BJ (cell line): ENCODE measurements at regions of chr2 and their contacts with region 1.

Region 1: DNA sequence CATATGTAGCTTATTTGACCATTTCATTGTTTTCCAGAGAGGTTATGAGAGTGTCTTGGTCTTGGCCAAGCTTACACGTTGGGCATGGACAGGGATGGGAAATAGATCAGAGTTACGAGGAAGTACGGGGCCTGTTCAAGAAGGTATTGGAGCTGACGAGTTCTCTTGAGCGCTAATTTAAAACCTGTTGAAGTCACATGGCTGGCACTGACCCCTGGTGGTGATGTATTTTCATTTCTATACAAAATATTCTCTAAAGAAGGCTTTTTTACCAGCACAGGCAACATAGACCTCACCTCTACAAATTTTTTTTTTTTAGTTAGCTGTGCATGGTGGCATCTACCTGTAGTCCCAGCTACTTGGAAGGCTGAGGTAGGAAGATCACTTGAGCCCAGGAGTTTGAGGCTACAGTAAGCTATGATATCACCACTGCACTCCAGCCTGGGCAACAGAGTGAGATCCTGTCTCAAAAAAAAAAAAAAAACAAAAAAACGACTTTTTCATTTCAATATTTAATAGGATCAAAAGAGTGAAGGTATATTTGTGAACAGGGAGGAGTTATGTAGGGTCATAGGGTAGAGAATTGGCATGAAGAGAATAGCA is 19.6 kb downstream of the UGP2 start:
- DNase-seq: no peak
- H3K4me3 ChIP-seq: no peak overlapping the region
- H3K27me3 ChIP-seq: no peaks in the 10 kb centered on the region
- CTCF ChIP-seq: peak; percentile 53

Region 2: GRCh38 chr2:63692002-63692606 is 169.2 kb before region 1 on chr2:
- CTCF ChIA-PET with region 1: interaction called, 28 read pairs
- POLR2A ChIA-PET with region 1: no interaction called
- DNase-seq: peak; percentile 29
- H3K4me3 ChIP-seq: no peak overlapping the region
- H3K27me3 ChIP-seq: no peaks in the 10 kb centered on the region
- CTCF ChIP-seq: peak; percentile 45